ENCODE measurements at regions of chr1 and their contacts with region 1.

Region 1: GRCh38 chr1:43227143-43227764 is 42.5 kb upstream of the TMEM125 start:
- DNase-seq: peak; percentile 34
- ATAC-seq: peak; percentile 99
- H3K4me3 ChIP-seq: no peak overlapping the region
- H3K27ac ChIP-seq: no peak overlapping the region
- H3K4me1 ChIP-seq: no peaks in the 10 kb centered on the region; the same call in none of the 2 replicates
- H3K27me3 ChIP-seq: no peaks in the 10 kb centered on the region
- CTCF ChIP-seq: peak; percentile 91 to 95 (median 94)
- EP300 ChIP-seq: no peak
- POLR2A ChIP-seq: no peak
- RAD21 ChIP-seq: peak; percentile 97

Region 2: DNA sequence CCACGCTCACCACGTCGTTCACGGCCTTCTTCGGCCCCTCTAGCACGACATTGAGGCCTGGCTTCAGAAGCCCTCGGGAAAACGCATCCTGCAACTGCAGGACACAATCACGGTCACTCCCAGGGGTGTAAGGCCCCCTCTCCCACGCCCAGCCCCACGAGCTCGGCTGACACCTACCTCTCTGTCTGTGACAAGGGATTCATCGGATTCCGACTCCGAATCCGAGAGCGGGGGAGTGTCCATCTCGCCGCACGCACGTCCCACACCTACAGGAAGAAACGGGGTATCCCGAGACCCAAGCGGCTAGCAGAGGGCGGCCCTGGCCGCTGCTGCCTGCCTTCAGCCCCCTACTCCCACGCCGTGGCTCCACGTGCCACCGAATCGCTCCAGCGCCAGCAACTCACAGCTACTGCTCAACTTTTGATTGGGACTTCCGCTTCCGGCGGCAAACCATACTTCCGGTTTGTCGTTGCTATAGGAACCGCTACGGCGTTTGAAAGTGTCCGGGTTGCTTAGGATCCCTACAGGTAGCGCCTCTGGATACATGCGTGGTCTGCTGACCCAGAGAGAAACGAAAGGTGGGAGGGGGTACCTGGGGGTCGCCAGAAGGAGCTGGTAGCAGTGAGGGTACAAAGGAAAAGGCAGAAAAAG is 55.3 kb before region 1 on chr1 and contains the starts of genes CFAP57 and EBNA1BP2:
- CTCF ChIA-PET with region 1: interaction called, 11 read pairs
- POLR2A ChIA-PET with region 1: no interaction called
- RAD21 ChIA-PET with region 1: interaction called, 3 read pairs
- SMC1A ChIA-PET with region 1: interaction called, 4 read pairs
- in situ Hi-C with region 1: no loop called
- intact Hi-C with region 1: no loop called
- DNase-seq: peak; percentile 91
- ATAC-seq: peak; percentile 95
- H3K4me3 ChIP-seq: peak within 1 kb of the TSS; percentile 90
- H3K27ac ChIP-seq: peak within 1 kb of the TSS; percentile 74
- H3K4me1 ChIP-seq: peaks cover 5% of the 10 kb centered on the region; the same call in 1 of the 2 replicates
- H3K27me3 ChIP-seq: no peaks in the 10 kb centered on the region; a peak in 1 of 4 replicates
- CTCF ChIP-seq: no peak
- EP300 ChIP-seq: no peak
- POLR2A ChIP-seq: peak; percentile 91
- RAD21 ChIP-seq: no peak
- polyA plus RNA-seq, gene CFAP57: 0.45 to 0.60 TPM
- polyA plus RNA-seq, gene EBNA1BP2: 57.5 to 114 TPM

Region 3: DNA sequence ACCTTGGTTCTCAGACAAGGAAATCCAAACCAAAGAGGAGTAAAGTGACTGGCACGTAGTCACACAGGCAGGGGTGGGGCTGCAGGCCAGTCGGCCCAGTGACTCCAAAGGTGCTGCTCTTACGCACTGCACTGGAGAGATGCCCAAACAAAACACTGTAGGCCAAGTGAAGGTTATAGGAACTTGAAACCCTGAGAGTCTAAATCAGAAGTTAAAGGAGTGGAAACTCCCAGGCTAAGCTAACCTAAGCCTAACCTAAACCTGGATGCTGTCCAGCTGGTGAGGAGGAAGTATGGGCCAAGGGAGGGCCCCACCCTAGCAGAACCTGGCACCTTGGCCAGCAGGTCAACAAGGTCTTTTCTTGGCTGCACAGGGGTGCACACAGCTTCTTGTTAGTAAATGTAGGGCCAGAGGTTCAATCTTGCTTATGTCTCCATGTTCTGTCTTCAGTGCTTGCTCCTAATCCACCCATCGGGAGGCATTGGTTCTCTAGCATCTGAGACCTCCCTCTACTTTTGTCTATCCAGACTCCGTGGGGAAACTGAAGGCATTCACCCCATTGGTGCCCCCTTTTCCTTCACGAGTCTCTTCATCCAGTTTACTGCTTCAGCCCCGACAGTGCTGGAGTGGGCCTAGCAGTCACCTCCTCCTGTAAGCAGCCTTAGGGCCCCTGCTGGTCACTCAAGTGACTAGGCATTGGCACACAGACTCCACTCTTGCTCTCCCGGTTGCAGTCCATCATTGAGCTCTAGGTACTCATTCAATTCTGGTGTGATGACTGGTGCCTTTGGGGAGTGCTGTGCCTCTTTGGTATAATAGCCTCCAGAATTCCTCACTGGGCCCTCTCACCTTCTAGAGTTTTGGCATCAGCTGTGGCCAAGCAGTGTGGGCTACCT is 29.7 kb after region 1 on chr1:
- CTCF ChIA-PET with region 1: no interaction called
- POLR2A ChIA-PET with region 1: no interaction called
- RAD21 ChIA-PET with region 1: no interaction called
- SMC1A ChIA-PET with region 1: no interaction called
- in situ Hi-C with region 1: no loop called
- intact Hi-C with region 1: no loop called
- DNase-seq: no peak
- ATAC-seq: no peak
- H3K4me3 ChIP-seq: no peak overlapping the region
- H3K27ac ChIP-seq: no peak overlapping the region
- H3K4me1 ChIP-seq: no peaks in the 10 kb centered on the region
- H3K27me3 ChIP-seq: no peaks in the 10 kb centered on the region; a peak in 1 of 4 replicates
- CTCF ChIP-seq: no peak
- EP300 ChIP-seq: no peak
- POLR2A ChIP-seq: no peak
- RAD21 ChIP-seq: no peak

Region 4: DNA sequence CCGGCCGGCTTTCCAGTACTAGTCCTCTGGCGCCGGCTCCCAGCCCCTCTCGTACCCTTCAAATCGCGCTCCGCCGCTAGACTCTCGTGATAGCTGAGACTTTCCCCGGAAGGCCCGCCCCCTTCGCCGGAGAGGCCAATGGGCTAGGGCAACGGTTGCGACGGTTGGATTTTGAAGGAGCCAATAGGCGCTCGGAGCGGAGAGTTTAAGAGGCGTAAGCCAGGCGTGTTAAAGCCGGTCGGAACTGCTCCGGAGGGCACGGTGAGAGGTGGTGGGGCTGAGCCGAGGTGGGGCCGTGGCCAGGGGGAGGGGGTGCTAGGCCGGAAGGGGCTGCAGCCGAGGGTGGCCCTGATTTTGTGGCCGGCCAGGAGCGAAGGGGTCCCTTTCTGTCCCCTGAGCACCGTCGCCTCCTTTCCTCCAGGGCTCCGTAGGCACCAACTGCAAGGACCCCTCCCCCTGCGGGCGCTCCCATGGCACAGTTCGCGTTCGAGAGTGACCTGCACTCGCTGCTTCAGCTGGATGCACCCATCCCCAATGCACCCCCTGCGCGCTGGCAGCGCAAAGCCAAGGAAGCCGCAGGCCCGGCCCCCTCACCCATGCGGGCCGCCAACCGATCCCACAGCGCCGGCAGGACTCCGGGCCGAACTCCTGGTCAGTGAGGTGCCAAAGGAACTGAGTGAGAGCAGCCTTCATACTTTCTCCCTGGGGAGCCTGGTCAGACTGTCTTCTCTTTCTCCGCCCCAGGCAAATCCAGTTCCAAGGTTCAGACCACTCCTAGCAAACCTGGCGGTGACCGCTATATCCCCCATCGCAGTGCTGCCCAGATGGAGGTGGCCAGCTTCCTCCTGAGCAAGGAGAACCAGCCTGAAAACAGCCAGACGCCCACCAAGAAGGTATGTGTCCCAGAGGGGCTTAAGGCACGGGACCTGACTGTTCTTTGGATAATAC is 131.8 kb after region 1 on chr1 and contains the start of gene CDC20:
- CTCF ChIA-PET with region 1: interaction called, 19 read pairs
- POLR2A ChIA-PET with region 1: no interaction called
- RAD21 ChIA-PET with region 1: interaction called, 23 read pairs
- SMC1A ChIA-PET with region 1: interaction called, 26 read pairs
- in situ Hi-C with region 1: no loop called
- intact Hi-C with region 1: no loop called
- DNase-seq: peak; percentile 89
- ATAC-seq: peak; percentile 98
- H3K4me3 ChIP-seq: peak within 1 kb of the TSS; percentile 92
- H3K27ac ChIP-seq: peak within 1 kb of the TSS; percentile 87
- H3K4me1 ChIP-seq: peaks cover 10% of the 10 kb centered on the region
- H3K27me3 ChIP-seq: no peaks in the 10 kb centered on the region
- CTCF ChIP-seq: no peak
- EP300 ChIP-seq: no peak
- POLR2A ChIP-seq: peak; percentile 91
- RAD21 ChIP-seq: no peak
- polyA plus RNA-seq, gene CDC20: 36.3 to 63.1 TPM

Region 5: DNA sequence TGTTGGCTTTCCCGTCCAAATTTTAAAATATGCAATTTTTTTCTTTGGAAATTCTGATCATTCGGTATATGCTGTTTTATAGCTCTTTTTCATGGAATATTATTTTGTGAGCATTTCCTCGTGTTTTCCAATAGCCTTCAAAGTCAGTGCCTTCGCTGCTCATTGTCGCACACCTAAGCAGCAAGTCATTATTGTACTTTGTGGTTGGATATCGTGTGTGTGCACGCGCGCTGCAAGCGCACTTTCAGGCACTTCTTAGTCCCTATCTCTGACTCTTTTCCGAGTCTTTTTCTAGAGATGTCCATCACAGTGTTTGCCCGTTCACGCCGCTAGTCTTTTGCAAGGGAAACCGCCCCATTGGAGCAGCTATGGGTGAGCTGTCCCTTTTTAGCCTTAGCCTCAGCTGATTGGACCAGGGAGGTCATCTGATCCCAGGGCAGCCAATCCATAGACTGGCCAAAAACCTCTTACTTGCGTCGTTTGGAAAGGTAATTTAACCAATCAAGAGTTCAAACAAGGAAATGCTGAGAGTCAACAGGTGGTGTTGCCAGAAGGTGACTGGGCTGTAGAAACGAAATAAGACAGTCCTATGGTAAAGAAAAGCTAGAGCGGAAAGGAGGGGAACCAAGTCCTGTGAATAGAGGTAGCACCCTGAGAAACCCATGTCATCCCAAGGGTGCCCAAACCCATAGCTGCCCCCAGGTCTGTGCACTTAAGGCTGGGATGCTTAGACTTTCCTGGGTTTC is 227.2 kb after region 1 on chr1:
- CTCF ChIA-PET with region 1: interaction called, 13 read pairs
- POLR2A ChIA-PET with region 1: no interaction called
- RAD21 ChIA-PET with region 1: interaction called, 6 read pairs
- SMC1A ChIA-PET with region 1: interaction called, 5 read pairs
- in situ Hi-C with region 1: no loop called
- intact Hi-C with region 1: no loop called
- DNase-seq: peak; percentile 74
- ATAC-seq: peak; percentile 93
- H3K4me3 ChIP-seq: peak overlapping the region; percentile 74; the same call in 1 of the 2 replicates
- H3K27ac ChIP-seq: peak overlapping the region; percentile 61
- H3K4me1 ChIP-seq: peaks cover 7% of the 10 kb centered on the region
- H3K27me3 ChIP-seq: no peaks in the 10 kb centered on the region
- CTCF ChIP-seq: no peak
- EP300 ChIP-seq: no peak
- POLR2A ChIP-seq: no peak; the same call in 1 of the 2 replicates
- RAD21 ChIP-seq: no peak

Region 6: DNA sequence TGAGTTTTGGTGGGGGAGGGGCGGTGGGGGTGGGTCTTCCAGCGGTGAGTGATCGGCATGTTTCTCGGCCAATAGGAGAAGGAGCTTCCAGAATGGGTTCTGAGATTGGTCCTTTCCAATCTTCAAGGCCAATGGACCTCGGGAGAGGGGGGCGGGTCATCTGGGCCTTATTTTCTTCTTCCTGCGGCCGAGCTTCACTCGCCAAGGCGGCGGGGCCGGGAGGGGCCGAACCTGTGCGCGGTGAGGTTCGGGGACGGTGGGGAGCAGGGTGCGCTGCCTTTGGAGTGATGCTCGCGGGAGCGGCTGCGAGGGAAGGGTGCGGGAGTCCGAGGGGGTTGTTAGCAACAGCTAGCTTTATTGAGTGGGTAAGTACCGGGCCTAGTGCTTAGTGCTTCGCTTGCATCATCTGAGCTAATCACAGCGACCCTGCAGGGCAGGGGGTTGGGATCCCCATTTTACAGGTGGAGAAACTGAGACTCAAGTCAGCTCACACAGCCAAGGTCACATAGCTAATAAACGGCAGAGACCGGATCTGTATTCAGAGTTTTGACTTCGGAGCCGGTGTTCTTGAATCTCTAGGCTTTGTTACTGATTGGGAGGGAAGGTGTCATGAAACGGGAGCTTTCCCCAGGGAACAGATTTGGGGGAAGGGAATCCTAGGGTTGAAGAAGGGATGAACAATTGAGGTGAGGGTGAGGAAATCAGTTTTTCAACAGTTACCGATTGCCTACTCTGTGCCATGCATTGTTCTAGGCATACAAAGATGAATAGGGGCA is 423.2 kb after region 1 on chr1:
- CTCF ChIA-PET with region 1: interaction called, 6 read pairs
- POLR2A ChIA-PET with region 1: no interaction called
- RAD21 ChIA-PET with region 1: interaction called, 3 read pairs
- SMC1A ChIA-PET with region 1: interaction called, 7 read pairs
- in situ Hi-C with region 1: no loop called
- intact Hi-C with region 1: loop called (anchors 10 kb)
- DNase-seq: peak; percentile 83
- ATAC-seq: peak; percentile 87
- H3K4me3 ChIP-seq: peak overlapping the region; percentile 98
- H3K27ac ChIP-seq: peak overlapping the region; percentile 85
- H3K4me1 ChIP-seq: peaks cover 10% of the 10 kb centered on the region
- H3K27me3 ChIP-seq: no peaks in the 10 kb centered on the region
- CTCF ChIP-seq: no peak
- EP300 ChIP-seq: no peak
- POLR2A ChIP-seq: peak; percentile 100
- RAD21 ChIP-seq: no peak